Caco-2 (cell line): ENCODE measurements at regions of chr2 and their contacts with region 1.

Region 1: DNA sequence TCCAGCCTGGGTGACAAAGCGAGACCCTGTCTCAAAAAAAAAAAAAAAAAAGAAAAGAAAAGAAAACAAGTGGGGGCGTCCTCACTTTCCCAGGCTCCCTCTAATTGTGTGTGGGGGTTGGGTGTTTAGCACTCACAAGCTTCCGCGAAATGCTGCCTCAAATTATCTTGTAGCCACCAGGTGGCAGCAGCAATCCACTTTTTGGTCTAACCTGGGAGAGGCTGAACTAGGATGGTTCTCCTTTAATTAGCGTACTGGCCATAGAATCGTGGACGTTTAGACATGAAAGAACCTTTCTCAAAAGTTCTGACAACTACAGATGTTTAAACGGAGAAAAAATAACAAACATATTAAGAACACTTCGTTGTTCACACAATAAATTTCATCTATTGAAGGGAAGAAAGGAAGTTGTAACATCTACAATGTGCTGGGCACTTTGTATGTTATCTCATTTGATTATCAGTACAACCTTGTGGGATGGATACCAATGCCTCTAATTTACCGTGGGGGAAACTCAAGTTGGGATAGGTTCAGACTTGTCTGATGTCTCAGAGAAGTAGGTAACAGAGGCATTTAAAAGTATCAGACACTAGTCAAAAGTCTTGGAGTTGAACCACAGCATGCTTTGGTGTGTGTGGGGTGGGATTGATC is 122.7 kb upstream of the NABP1 start:
- DNase-seq: peak; percentile 86 to 92
- H3K4me3 ChIP-seq: no peak overlapping the region
- H3K4me3 Mint-ChIP-seq: peak overlapping the region; percentile 49
- H3K27ac Mint-ChIP-seq: peak overlapping the region; percentile 29
- H3K4me1 ChIP-seq: peaks cover 7% of the 10 kb centered on the region
- H3K4me1 Mint-ChIP-seq: peaks cover 29% of the 10 kb centered on the region
- H3K27me3 ChIP-seq: no peaks in the 10 kb centered on the region
- H3K27me3 Mint-ChIP-seq: no peaks in the 10 kb centered on the region
- CTCF ChIP-seq: peak; percentile 72 to 84

Region 2: DNA sequence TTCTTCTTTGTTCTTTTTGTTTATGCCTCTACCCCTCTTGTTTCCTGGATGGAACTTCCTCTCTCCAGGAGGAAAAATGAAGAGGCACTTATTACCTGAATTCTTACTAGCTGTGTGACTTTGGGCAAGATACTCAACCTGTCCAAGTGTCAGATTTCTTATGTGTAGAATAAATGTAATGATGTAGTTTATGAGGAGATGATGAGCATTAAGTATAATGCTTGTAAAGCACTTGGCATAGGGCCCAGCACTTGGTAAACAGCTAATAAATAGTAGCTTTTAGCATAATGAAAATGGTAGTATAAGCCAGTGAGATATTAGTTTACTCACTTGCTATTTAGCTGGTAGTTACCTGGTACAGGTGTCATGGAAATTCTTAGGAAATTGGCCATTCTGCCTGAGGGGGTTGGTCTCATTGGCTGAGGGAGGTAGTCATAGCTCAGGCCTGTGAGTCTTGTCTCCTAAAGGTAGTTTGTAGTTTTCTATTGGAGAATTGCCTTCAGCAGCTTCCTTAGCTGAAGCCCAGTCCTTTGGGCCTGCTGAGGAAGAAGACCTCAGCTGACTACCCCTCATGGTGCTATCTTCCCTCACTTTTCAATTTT is 10.7 kb before region 1 on chr2:
- CTCF ChIA-PET with region 1: no interaction called
- POLR2A ChIA-PET with region 1: no interaction called
- intact Hi-C with region 1: no loop called
- DNase-seq: no peak
- H3K4me3 ChIP-seq: no peak overlapping the region
- H3K4me3 Mint-ChIP-seq: no peak overlapping the region
- H3K27ac Mint-ChIP-seq: no peak overlapping the region
- H3K4me1 ChIP-seq: 0 out of 2 replicates have a peak, but pooled peaks cover 2% of the 10 kb centered on the region
- H3K4me1 Mint-ChIP-seq: peaks cover 7% of the 10 kb centered on the region
- H3K27me3 ChIP-seq: no peaks in the 10 kb centered on the region
- H3K27me3 Mint-ChIP-seq: no peaks in the 10 kb centered on the region
- CTCF ChIP-seq: no peak

Region 3: GRCh38 chr2:191691016-191691735 is 136.0 kb after region 1 on chr2:
- CTCF ChIA-PET with region 1: interaction called, 7 read pairs
- POLR2A ChIA-PET with region 1: no interaction called
- intact Hi-C with region 1: loop called (anchors 1 kb)
- DNase-seq: peak; percentile 56 to 70
- H3K4me3 ChIP-seq: no peak overlapping the region
- H3K4me3 Mint-ChIP-seq: peak overlapping the region; percentile 52
- H3K27ac Mint-ChIP-seq: peak overlapping the region; percentile 53
- H3K4me1 ChIP-seq: peaks cover 62% of the 10 kb centered on the region
- H3K4me1 Mint-ChIP-seq: peaks cover 44% of the 10 kb centered on the region
- H3K27me3 ChIP-seq: no peaks in the 10 kb centered on the region
- H3K27me3 Mint-ChIP-seq: no peaks in the 10 kb centered on the region
- CTCF ChIP-seq: peak; percentile 72 to 82

Region 4: DNA sequence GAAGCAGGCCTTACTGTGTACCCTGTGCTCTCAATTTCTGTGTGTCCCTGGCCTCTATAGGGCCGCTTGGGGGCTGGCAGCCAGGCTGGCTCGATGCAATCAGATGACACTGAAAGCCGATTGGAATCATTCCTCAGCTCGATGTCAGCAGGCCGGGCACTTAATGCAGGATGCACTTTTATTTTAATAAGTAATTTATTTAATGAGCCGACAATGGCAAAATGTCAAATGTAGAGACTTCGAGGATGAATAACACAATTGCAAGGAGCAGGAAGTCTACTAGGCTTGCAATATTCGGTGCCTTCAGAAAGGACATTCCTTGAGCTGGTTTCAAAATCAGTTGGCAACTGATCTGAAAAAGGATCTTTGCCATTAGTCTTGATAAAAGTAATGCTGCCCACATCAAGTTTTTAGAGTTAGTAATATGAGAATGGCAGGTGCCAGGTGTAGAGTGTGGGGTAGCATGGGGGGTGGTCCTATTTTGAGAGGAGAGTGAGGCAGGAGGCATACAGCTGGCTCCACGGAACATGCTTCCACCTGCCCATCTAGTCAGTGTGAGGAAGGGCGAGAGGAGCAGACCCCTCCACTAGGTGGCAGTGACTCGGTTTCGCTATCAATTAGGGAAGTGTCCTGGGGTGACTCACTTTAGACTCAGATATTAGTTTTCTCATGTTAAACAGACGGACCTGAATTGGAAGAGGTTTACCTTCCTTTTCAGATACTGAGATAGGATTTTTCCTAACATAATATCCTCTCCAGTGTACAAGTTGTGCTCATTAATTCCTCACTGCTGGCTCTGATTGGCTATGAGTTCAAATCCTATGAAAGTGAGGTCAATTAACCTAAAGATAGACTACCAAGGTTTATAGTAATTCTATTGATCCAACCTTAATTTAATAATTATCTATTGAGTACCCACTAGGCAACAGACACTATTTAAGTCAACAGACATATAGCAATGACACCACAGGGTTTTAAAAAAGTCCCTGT is 203.6 kb after region 1 on chr2:
- CTCF ChIA-PET with region 1: no interaction called
- POLR2A ChIA-PET with region 1: no interaction called
- intact Hi-C with region 1: loop called (anchors 2 kb)
- DNase-seq: peak; percentile 75 to 77
- H3K4me3 ChIP-seq: no peak overlapping the region
- H3K4me3 Mint-ChIP-seq: no peak overlapping the region
- H3K27ac Mint-ChIP-seq: no peak overlapping the region
- H3K4me1 ChIP-seq: 0 out of 2 replicates have a peak, but pooled peaks cover 6% of the 10 kb centered on the region
- H3K4me1 Mint-ChIP-seq: no peaks in the 10 kb centered on the region
- H3K27me3 ChIP-seq: no peaks in the 10 kb centered on the region
- H3K27me3 Mint-ChIP-seq: no peaks in the 10 kb centered on the region
- CTCF ChIP-seq: peak; percentile 63 to 89

Region 5: DNA sequence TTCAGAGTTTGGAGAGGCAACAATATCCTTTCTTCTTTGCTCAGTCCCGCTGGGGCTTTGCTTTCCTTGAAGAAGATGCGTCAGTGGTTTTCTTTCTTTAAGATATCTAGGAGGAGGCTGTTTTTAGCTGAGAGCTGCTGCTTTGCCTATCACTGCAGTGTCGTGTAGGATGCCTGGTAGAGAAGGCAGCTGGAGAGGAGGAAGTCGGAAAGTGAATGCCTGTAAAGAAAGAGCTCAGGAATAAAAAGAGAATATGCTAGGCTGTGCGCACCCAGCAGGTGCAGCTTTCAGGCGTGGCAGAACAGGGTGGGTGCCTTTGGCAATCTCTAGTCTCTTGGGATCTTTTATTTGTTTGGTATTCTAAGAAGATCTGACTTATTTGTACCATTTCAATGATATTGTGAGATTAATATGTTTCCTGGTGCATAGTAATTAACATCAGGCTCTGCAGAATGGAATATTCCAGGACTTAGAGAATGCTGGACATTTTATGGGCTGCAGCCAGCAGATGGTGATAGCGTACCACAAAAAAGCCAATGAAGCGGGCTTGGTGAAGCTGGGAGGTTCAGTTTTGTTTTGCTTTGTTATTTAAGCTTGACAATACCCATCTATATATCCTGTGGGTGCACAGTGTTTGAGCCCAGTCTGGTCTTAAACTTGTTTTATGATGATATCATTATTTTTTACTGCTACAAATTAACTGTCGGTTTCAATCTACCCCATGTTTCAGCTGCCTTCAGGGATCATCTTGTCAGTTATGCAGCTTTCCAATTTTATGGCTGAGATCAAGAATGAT is 256.8 kb after region 1 on chr2:
- CTCF ChIA-PET with region 1: interaction called, 10 read pairs
- POLR2A ChIA-PET with region 1: no interaction called
- intact Hi-C with region 1: loop called (anchors 1 kb)
- DNase-seq: peak; percentile 58 to 70
- H3K4me3 ChIP-seq: no peak overlapping the region
- H3K4me3 Mint-ChIP-seq: no peak overlapping the region
- H3K27ac Mint-ChIP-seq: no peak overlapping the region
- H3K4me1 ChIP-seq: no peaks in the 10 kb centered on the region
- H3K4me1 Mint-ChIP-seq: no peaks in the 10 kb centered on the region
- H3K27me3 ChIP-seq: no peaks in the 10 kb centered on the region
- H3K27me3 Mint-ChIP-seq: no peaks in the 10 kb centered on the region
- CTCF ChIP-seq: peak; percentile 79 to 82

Region 6: DNA sequence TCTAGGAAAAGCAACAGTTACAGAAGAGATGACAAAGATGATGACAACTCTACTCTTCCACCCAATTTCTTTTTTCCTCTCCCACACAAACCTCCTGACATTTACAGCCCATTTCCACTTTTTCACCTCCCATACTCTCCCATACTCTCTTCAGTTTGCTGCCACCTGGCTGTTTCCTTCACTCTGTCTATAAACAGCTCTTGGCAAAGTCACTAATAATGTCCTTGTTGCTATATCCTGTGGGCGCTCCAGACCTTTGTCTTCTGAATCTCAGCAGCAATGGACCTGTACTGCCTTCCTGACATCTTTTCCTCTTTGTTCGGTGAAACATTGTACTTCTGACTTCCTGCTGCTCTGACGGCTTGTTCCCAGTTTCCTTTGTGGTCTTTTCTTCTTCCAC is 352.3 kb after region 1 on chr2:
- CTCF ChIA-PET with region 1: no interaction called
- POLR2A ChIA-PET with region 1: no interaction called
- intact Hi-C with region 1: loop called (anchors 1 kb)
- DNase-seq: peak in 1 of 2 experiments; percentile 14
- H3K4me3 ChIP-seq: no peak overlapping the region
- H3K4me3 Mint-ChIP-seq: no peak overlapping the region
- H3K27ac Mint-ChIP-seq: no peak overlapping the region
- H3K4me1 ChIP-seq: no peaks in the 10 kb centered on the region
- H3K4me1 Mint-ChIP-seq: no peaks in the 10 kb centered on the region
- H3K27me3 ChIP-seq: no peaks in the 10 kb centered on the region
- H3K27me3 Mint-ChIP-seq: no peaks in the 10 kb centered on the region
- CTCF ChIP-seq: peak in 1 of 2 experiments; percentile 36

Region 7: DNA sequence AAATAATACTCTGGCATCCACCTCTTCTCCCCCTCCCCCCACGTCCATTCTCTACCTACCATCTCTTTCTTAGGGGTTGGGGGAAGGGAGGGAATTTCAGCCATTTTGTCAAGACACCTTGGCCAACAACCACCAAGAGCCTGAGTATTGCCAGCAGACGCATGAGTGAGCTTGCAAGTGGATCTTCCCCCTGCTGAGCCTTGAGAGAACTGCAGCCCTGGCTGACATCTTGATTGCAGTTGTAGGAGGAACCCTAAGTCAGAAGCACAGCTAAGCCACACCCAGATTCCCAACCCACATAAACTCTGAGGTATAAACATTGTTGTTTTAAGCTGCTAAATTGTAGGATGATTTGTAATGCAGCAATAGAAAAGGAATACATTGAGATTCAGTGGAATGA is 473.9 kb after region 1 on chr2:
- CTCF ChIA-PET with region 1: no interaction called
- POLR2A ChIA-PET with region 1: no interaction called
- intact Hi-C with region 1: loop called (anchors 1 kb)
- DNase-seq: peak; percentile 56 to 58
- H3K4me3 ChIP-seq: no peak overlapping the region
- H3K4me3 Mint-ChIP-seq: no peak overlapping the region
- H3K27ac Mint-ChIP-seq: no peak overlapping the region
- H3K4me1 ChIP-seq: no peaks in the 10 kb centered on the region
- H3K4me1 Mint-ChIP-seq: no peaks in the 10 kb centered on the region
- H3K27me3 ChIP-seq: no peaks in the 10 kb centered on the region
- H3K27me3 Mint-ChIP-seq: peaks cover 4% of the 10 kb centered on the region
- CTCF ChIP-seq: peak; percentile 38 to 42

Region 8: DNA sequence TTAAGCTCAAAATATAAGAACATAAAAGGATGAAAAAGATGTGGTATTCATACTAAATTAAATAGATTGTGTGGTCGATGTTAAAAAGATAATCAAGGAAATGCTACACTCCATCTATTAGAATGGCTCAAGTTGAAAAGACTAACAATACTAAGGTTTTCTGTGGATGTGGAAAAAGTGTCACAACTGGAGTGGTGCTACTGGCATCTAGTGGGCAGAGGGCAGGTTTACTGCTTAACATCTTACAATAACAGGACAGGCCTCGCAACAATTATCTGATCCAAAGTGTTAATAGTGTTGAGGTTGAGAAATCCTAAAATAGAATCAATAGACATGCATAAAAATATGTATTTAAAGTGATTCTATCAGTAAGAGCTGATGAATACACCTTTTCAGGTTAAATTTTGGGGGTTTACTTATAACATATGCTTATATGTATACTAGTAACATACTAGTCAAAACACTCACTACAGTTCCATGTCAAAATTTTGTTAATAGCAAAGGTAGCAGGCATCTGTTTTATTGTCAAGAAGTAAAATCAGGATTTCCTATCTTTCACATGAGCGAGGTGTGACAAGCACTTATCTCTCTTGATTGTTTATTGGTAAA is 731.0 kb after region 1 on chr2:
- CTCF ChIA-PET with region 1: no interaction called
- POLR2A ChIA-PET with region 1: no interaction called
- intact Hi-C with region 1: loop called (anchors 2 kb)
- DNase-seq: peak in 1 of 2 experiments; percentile 12
- H3K4me3 ChIP-seq: no peak overlapping the region
- H3K4me3 Mint-ChIP-seq: no peak overlapping the region
- H3K27ac Mint-ChIP-seq: no peak overlapping the region
- H3K4me1 ChIP-seq: no peaks in the 10 kb centered on the region
- H3K4me1 Mint-ChIP-seq: no peaks in the 10 kb centered on the region
- H3K27me3 ChIP-seq: no peaks in the 10 kb centered on the region
- H3K27me3 Mint-ChIP-seq: no peaks in the 10 kb centered on the region
- CTCF ChIP-seq: peak; percentile 10 to 22